CD8-positive, alpha-beta T cell (primary cell): ENCODE measurements at regions of chr2 and their contacts with region 1.

Region 1: GRCh38 chr2:196076778-196077568 is 8.3 kb upstream of the DNAH7 start:
- DNase-seq: no peak
- ATAC-seq: no peak
- H3K4me3 ChIP-seq: no peak overlapping the region
- H3K4me3 Mint-ChIP-seq: no peak overlapping the region
- H3K27ac ChIP-seq: no peak overlapping the region
- H3K27ac Mint-ChIP-seq: no peak overlapping the region
- H3K4me1 ChIP-seq: peaks cover 13% of the 10 kb centered on the region
- H3K4me1 Mint-ChIP-seq: peaks cover 23% of the 10 kb centered on the region
- H3K27me3 ChIP-seq: no peaks in the 10 kb centered on the region
- H3K27me3 Mint-ChIP-seq: no peaks in the 10 kb centered on the region
- CTCF ChIP-seq: no peak

Region 2: DNA sequence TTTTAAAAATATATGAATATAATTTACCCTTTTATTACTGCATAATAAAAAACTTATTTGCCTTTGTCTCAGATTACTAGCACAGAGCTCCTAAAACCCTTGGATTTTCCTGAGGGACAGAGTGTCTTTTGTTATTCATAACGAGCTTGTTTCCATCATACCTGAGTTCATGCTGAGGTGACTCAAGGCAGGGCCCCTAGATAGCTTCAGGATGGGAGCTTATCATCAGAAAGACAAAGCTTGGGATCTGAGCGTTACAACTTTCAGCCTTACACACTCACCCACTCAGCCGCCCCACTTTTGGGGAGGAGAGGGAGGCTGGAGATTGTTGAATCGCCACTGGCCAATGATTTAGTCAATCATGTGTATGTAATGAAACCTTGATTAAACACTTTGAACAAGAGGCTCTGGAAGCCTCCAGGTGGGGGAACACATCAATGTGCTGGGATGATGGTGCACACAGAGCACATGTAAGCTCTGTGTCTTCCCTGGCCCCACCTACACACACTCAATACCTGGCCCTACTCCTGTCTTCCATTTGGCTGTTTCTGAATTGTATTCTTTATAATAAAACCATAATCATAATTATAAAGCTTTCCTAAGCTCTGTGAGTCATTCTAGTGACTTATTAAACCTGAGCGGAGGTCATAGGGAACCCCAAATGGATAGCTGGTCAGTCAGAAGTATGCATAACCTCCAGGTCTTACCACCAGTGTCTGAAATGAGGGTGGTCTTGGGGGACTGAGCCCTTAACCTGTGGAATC is 20.2 kb after region 1 on chr2:
- CTCF ChIA-PET with region 1: interaction called, 16 read pairs
- POLR2A ChIA-PET with region 1: no interaction called
- intact Hi-C with region 1: no loop called
- DNase-seq: no peak
- ATAC-seq: no peak
- H3K4me3 ChIP-seq: no peak overlapping the region
- H3K4me3 Mint-ChIP-seq: no peak overlapping the region
- H3K27ac ChIP-seq: no peak overlapping the region
- H3K27ac Mint-ChIP-seq: no peak overlapping the region
- H3K4me1 ChIP-seq: no peaks in the 10 kb centered on the region
- H3K4me1 Mint-ChIP-seq: peaks cover 7% of the 10 kb centered on the region
- H3K27me3 ChIP-seq: no peaks in the 10 kb centered on the region
- H3K27me3 Mint-ChIP-seq: no peaks in the 10 kb centered on the region
- CTCF ChIP-seq: no peak

Region 3: DNA sequence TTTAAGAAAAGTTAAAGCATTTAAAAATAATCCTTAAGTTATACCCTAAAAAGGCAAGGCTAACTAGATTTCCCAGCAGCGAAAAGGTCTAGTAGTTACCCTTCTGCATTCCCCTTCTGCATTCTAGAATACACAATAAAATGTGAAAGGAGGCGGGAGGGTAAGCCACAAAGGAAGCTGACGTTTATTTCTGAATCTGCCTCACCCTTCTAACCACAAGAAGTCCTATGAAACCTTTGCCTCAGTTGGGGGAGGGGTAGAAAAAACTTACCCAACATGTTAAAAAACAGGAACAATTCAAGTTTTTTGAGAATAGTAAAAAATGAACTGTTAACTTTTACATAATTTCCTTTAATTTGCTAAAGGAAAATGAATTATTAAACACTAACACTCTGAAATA is 83.1 kb after region 1 on chr2:
- CTCF ChIA-PET with region 1: interaction called, 18 read pairs
- POLR2A ChIA-PET with region 1: interaction called, 4 read pairs
- intact Hi-C with region 1: no loop called
- DNase-seq: peak in 7 of 9 experiments; percentile 49 to 94 (median 69)
- ATAC-seq: peak; percentile 46
- H3K4me3 ChIP-seq: peak overlapping the region; percentile 22 to 45
- H3K4me3 Mint-ChIP-seq: peak overlapping the region; percentile 58
- H3K27ac ChIP-seq: peak overlapping the region; percentile 75 to 91
- H3K27ac Mint-ChIP-seq: peak overlapping the region; percentile 73
- H3K4me1 ChIP-seq: peaks cover 86% of the 10 kb centered on the region
- H3K4me1 Mint-ChIP-seq: peaks cover 82% of the 10 kb centered on the region
- H3K27me3 ChIP-seq: no peaks in the 10 kb centered on the region
- H3K27me3 Mint-ChIP-seq: no peaks in the 10 kb centered on the region
- CTCF ChIP-seq: no peak

Region 4: GRCh38 chr2:196239622-196240587 is 162.9 kb after region 1 on chr2:
- CTCF ChIA-PET with region 1: interaction called, 10 read pairs
- POLR2A ChIA-PET with region 1: no interaction called
- intact Hi-C with region 1: no loop called
- DNase-seq: peak; percentile 55 to 94 (median 81)
- ATAC-seq: peak; percentile 72
- H3K4me3 ChIP-seq: peak overlapping the region; percentile 7 to 21
- H3K4me3 Mint-ChIP-seq: peak overlapping the region; percentile 72
- H3K27ac ChIP-seq: peak overlapping the region; percentile 33 to 73
- H3K27ac Mint-ChIP-seq: peak overlapping the region; percentile 92
- H3K4me1 ChIP-seq: peaks cover 66% of the 10 kb centered on the region
- H3K4me1 Mint-ChIP-seq: peaks cover 74% of the 10 kb centered on the region
- H3K27me3 ChIP-seq: no peaks in the 10 kb centered on the region
- H3K27me3 Mint-ChIP-seq: no peaks in the 10 kb centered on the region
- CTCF ChIP-seq: peak; percentile 35

Region 5: DNA sequence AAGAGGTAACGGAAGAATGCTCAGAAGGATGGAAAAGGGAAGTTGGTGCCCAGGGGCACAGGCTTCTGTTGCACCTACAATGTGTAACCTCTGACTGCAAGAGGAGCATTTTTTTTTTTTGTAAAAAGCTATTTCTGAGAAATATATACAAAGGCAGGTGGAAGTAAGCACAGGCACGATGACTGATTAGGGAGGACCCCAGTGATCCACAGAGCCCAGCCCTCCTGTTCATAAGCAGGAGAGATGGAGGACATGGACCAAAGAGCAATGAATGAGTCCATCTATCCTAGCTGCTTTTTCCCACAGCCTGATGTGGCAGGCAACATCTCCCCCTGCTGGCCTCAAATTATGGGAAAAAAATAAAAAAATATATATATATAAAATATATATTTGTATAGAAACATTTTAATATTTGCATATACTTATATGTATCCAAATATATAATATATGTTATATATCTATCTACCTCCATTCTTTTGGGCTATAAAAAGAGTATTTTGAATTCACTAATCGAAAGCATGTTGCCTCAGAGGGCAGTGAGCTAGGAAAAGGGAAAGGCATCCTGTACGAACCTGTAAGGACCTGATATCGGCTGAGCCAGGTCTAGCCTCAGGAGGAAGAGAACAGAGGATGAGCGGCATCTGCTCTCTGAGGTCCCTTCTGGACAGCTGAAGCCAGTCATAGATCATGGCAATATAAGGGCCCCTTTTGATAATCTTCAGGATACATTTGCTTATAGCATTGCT is 260.4 kb after region 1 on chr2:
- CTCF ChIA-PET with region 1: interaction called, 71 read pairs
- POLR2A ChIA-PET with region 1: interaction called, 3 read pairs
- intact Hi-C with region 1: loop called (anchors 1 kb)
- DNase-seq: peak in 4 of 9 experiments; percentile 13 to 58 (median 28)
- ATAC-seq: no peak
- H3K4me3 ChIP-seq: no peak overlapping the region
- H3K4me3 Mint-ChIP-seq: no peak overlapping the region
- H3K27ac ChIP-seq: no peak overlapping the region
- H3K27ac Mint-ChIP-seq: no peak overlapping the region
- H3K4me1 ChIP-seq: no peaks in the 10 kb centered on the region
- H3K4me1 Mint-ChIP-seq: peaks cover 3% of the 10 kb centered on the region
- H3K27me3 ChIP-seq: no peaks in the 10 kb centered on the region
- H3K27me3 Mint-ChIP-seq: peaks cover 3% of the 10 kb centered on the region
- CTCF ChIP-seq: peak; percentile 67

Region 6: GRCh38 chr2:196568506-196568905 is 491.5 kb after region 1 on chr2:
- CTCF ChIA-PET with region 1: no interaction called
- POLR2A ChIA-PET with region 1: no interaction called
- intact Hi-C with region 1: no loop called
- DNase-seq: no peak
- ATAC-seq: no peak
- H3K4me3 ChIP-seq: no peak overlapping the region
- H3K4me3 Mint-ChIP-seq: no peak overlapping the region
- H3K27ac ChIP-seq: no peak overlapping the region
- H3K27ac Mint-ChIP-seq: no peak overlapping the region
- H3K4me1 ChIP-seq: no peaks in the 10 kb centered on the region
- H3K4me1 Mint-ChIP-seq: no peaks in the 10 kb centered on the region
- H3K27me3 ChIP-seq: no peaks in the 10 kb centered on the region
- H3K27me3 Mint-ChIP-seq: peaks cover 25% of the 10 kb centered on the region
- CTCF ChIP-seq: no peak

Region 7: DNA sequence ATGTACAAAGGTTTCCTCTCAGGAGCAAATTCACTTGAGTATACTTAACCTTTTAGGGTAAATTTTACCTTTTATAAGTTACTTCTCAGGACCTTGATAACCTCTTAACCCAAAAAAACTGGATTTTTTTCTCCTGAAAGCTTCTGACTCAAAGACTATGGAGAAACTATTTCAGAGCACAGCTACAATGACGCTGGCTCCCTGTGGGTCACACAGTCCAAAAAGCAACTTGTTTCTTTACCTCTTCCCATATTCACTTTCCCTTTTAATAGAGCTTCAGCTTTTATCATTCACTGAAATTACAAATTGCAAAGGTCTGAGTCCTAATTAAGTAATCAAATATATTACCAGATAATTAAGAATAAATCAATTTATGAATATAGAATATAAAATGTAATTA is 690.1 kb after region 1 on chr2:
- CTCF ChIA-PET with region 1: no interaction called
- POLR2A ChIA-PET with region 1: no interaction called
- intact Hi-C with region 1: loop called in 1 of 2 experiments (anchors 10 kb)
- DNase-seq: no peak
- ATAC-seq: no peak
- H3K4me3 ChIP-seq: no peak overlapping the region
- H3K4me3 Mint-ChIP-seq: no peak overlapping the region
- H3K27ac ChIP-seq: no peak overlapping the region
- H3K27ac Mint-ChIP-seq: no peak overlapping the region
- H3K4me1 ChIP-seq: no peaks in the 10 kb centered on the region
- H3K4me1 Mint-ChIP-seq: no peaks in the 10 kb centered on the region
- H3K27me3 ChIP-seq: no peaks in the 10 kb centered on the region
- H3K27me3 Mint-ChIP-seq: no peaks in the 10 kb centered on the region
- CTCF ChIP-seq: no peak